AG04449 (cell line): ENCODE measurements at regions of chr7 and their contacts with region 1.

Region 1: DNA sequence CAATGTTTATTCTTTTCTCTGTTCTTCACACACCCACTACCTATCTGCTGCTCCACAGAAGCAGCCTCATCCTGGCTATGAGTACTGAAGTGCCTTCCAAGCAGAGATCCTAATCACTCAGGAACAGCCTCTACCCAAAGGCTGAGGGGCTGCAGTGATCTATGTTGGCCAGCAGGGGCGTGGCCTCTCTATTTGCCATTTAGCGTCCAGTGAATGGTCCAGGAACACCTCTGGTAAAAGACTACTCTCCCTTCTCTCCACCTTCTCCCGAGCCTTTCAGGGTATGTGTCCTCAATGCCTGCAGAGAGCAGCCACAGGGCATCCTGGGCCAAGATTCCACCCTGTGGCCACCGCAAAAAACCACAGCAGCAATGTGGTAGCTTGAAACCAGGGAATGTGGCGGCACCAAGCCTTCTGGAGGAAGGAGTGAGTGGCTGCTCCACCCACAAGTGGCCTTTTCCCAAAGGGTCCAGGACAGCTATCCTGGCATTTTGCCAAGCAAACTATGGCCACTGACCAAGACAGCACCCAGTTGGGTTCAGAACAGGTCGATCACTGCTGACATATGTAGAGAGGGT is 70.9 kb downstream of the SYPL1 start:
- DNase-seq: no peak
- H3K4me3 ChIP-seq: no peak overlapping the region
- CTCF ChIP-seq: peak; percentile 38

Region 2: DNA sequence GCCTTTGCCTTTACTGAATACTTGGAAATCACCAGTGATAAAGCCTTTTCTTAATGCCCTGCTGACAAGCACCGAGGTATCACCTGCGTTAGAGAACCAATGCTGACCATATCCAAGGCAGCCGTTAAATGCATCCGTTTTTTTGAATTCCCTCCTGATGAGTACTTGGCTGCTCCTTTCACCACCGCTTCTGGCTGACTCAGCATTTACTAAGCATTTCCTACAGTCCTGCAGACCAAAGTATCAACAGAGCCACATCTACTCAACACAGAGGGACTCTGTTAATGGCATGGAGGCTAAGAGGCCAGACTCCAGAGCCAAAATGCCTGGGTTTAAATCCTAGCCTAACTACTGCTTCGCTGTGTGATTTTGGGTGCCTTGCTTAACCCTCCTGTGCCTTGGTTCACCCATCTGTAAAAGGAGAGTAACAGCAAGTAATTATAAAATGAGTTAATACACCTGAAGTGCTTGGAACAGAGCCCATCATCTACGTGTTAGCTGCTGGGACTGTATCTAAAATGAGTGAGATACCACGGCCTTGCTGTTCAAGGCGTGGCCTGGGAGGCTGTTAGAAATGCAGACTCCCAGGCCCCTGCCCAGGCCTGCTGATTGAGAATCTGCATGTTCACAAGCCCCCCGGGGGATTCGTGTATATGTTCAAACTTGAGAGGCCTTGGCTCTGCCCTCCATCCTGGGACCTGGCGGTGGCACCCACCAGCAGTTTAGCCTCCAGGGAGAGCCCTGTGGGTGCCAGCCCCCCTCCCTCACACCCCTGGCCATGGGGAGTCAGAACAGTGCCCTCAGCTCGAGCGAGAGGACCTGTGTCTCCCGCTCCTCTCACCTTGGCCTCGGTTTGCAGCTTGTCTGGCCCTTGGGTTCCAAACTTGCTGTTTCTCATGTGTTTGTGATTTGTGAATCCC is 429.1 kb before region 1 on chr7:
- CTCF ChIA-PET with region 1: no interaction called
- POLR2A ChIA-PET with region 1: no interaction called
- DNase-seq: no peak
- H3K4me3 ChIP-seq: no peak overlapping the region
- CTCF ChIP-seq: no peak

Region 3: DNA sequence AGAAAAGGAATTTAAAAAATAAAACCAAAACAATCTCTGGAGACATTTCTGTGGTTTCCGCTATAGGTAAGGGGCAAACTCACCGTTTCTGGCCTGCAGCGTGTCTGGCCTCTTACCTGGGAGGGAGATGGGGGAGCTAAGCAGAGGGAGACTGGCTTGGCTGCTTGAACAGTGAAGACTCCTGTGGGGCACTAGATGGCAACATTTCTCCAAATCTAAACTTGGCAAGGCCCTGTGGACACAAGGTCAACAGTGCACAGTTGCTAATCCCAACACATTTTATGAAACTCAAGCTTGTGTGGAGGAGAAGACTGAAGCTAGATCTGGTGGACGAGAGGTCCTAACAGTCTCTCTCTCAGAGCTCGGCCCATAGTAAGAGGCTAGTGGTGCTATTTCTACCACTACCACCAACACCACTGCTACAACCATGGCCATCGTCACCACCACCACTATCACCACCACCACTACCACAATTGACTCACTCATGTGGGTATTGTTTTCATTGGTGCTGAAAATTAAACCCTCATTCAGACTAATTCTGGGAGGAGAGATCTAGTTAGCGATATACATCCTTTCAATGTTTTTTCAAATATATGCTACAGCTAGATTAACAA is 106.5 kb before region 1 on chr7:
- CTCF ChIA-PET with region 1: interaction called, 10 read pairs
- POLR2A ChIA-PET with region 1: interaction called, 3 read pairs
- DNase-seq: no peak
- H3K4me3 ChIP-seq: no peak overlapping the region
- CTCF ChIP-seq: peak; percentile 28

Region 4: GRCh38 chr7:106009403-106010226 is 31.6 kb before region 1 on chr7:
- CTCF ChIA-PET with region 1: interaction called, 18 read pairs
- POLR2A ChIA-PET with region 1: no interaction called
- DNase-seq: peak; percentile 92
- H3K4me3 ChIP-seq: peak overlapping the region; percentile 15; the same call in 1 of the 2 replicates
- CTCF ChIP-seq: peak; percentile 98

Region 5: DNA sequence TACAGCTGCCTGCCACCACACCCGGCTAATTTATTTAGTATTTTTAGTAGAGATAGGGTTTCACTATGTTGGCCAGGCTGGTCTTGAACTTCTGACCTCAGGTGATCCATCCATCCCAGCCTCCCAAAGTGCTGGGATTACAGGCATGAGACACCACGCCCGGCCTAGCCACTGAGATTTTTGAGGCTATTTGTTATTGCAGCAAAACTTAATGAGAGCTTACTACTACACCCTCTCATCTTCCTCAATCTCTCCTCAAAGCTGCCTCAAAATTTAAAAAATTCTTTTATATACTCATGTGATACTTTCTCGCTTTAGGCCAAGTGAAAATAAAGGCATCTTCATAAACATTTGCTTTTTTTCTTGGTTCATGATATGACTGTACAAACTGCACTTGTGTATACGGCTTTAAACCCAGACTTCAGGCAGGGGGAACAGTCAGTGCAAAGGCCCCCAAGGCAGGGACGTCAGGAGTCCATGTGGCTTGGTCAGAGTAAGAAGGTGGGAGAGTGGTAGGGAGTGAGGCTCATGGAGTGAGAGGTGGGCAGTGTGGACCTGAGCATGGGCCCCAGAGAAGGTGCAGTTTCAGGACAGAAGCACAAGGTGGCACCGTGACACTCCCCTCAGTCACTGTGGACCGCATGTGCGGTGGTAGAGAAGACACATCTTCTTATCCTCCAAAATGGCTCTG is 15.4 kb after region 1 on chr7:
- CTCF ChIA-PET with region 1: interaction called, 29 read pairs
- POLR2A ChIA-PET with region 1: no interaction called
- DNase-seq: no peak
- H3K4me3 ChIP-seq: no peak overlapping the region
- CTCF ChIP-seq: peak; percentile 92

Region 6: DNA sequence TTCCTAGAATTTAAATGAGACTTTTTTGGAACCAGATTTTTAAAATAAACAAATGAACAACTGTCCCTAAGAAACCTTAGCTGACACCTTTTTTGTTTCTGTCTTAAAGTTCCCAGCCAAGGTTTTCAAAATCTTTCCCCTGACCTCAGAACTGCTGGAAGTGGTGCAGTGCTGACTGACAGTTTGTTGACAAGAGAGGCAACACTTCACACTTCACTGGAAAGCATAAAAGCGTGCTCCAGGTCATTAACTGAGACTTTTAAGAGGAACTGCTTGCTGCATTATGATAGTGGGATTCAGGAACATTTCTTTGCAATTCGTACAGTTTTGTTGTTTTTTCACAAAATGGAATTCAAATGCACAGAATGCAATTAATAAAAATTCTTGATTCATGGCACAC is 34.7 kb after region 1 on chr7:
- CTCF ChIA-PET with region 1: no interaction called
- POLR2A ChIA-PET with region 1: no interaction called
- DNase-seq: no peak
- H3K4me3 ChIP-seq: no peak overlapping the region
- CTCF ChIP-seq: no peak

Region 7: DNA sequence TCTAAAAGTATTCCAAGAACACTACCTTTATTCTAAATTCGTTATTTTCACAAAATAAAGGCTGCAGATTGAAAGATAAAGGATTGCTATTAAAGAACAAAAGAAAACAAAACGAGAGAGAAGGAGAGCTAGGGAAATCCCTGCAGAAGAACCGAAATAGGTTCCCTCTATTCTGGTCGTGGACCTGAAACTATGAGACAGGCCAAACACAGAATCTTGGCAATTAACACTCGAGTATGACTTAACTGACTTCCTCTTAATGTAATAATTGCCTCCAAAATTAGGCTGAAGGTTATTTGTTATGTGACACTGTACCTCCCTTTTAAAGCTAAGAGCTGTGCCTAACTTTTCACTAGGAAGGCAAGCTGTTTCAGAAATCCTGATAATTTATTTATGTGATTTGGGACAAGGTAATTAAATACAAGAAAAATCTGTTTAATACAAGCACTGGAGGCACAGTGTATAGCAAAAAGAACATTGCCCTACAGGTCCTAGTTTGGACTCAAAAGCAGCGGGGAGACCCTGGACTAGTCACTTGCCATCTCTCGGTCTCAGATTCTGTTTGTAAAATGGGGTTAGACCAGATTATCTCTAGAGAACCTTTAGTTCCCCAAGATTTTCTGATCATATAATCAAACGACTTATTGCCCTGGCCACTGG is 231.9 kb after region 1 on chr7:
- CTCF ChIA-PET with region 1: no interaction called
- POLR2A ChIA-PET with region 1: no interaction called
- DNase-seq: no peak
- H3K4me3 ChIP-seq: no peak overlapping the region
- CTCF ChIP-seq: no peak